Activated CD4-positive, alpha-beta T cell treated with anti-CD3 and anti-CD28 coated beads, Interleukin-2, amount 10 ng/mL, durations not matched to agents 24 days and 14 days (primary cell): ENCODE measurements at regions of chr10 and their contacts with region 1.

Region 1: GRCh38 chr10:128180843-128181242 is 54.6 kb upstream of the MKI67 start:
- DNase-seq: peak; percentile 90
- H3K4me3 Mint-ChIP-seq: peak overlapping the region; percentile 81
- H3K27ac Mint-ChIP-seq: peak overlapping the region; percentile 88
- H3K4me1 Mint-ChIP-seq: peaks cover 45% of the 10 kb centered on the region
- H3K27me3 Mint-ChIP-seq: peaks cover 21% of the 10 kb centered on the region

Region 2: DNA sequence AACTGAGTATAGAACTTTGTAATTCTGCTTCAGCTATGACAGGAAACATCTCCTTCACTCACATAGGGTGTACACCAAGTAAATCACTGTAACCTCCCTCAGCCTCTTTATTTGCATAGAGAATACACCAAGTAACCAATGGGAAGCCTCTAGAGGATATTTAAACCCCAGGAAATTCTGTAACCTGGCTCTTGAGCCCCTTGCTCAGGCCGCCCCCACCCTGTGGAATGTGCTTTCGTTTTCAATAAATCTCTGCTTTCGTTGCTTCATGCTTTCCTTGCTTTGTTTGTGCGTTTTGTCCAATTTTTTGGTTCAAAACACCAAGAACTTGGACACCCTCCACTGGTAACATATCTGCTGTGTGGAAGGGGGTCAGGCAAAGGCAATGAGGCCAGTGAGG is 348.3 kb before region 1 on chr10:
- intact Hi-C with region 1: no loop called
- DNase-seq: no peak
- H3K4me3 Mint-ChIP-seq: no peak overlapping the region
- H3K27ac Mint-ChIP-seq: no peak overlapping the region
- H3K4me1 Mint-ChIP-seq: no peaks in the 10 kb centered on the region
- H3K27me3 Mint-ChIP-seq: no peaks in the 10 kb centered on the region

Region 3: GRCh38 chr10:128211953-128212727 is 31.3 kb after region 1 on chr10:
- intact Hi-C with region 1: loop called (anchors 1 kb)
- DNase-seq: peak; percentile 97
- H3K4me3 Mint-ChIP-seq: peak overlapping the region; percentile 81
- H3K27ac Mint-ChIP-seq: peak overlapping the region; percentile 84
- H3K4me1 Mint-ChIP-seq: peaks cover 9% of the 10 kb centered on the region
- H3K27me3 Mint-ChIP-seq: peaks cover 13% of the 10 kb centered on the region

Region 4: GRCh38 chr10:130171196-130171595 is 1990.4 kb after region 1 on chr10:
- intact Hi-C with region 1: loop called (anchors 5 kb)
- DNase-seq: peak; percentile 86
- H3K4me3 Mint-ChIP-seq: peak overlapping the region; percentile 27
- H3K27ac Mint-ChIP-seq: peak overlapping the region; percentile 2
- H3K4me1 Mint-ChIP-seq: peaks cover 29% of the 10 kb centered on the region
- H3K27me3 Mint-ChIP-seq: no peaks in the 10 kb centered on the region